ENCODE measurements at regions of chr17 and their contacts with region 1.

Region 1: DNA sequence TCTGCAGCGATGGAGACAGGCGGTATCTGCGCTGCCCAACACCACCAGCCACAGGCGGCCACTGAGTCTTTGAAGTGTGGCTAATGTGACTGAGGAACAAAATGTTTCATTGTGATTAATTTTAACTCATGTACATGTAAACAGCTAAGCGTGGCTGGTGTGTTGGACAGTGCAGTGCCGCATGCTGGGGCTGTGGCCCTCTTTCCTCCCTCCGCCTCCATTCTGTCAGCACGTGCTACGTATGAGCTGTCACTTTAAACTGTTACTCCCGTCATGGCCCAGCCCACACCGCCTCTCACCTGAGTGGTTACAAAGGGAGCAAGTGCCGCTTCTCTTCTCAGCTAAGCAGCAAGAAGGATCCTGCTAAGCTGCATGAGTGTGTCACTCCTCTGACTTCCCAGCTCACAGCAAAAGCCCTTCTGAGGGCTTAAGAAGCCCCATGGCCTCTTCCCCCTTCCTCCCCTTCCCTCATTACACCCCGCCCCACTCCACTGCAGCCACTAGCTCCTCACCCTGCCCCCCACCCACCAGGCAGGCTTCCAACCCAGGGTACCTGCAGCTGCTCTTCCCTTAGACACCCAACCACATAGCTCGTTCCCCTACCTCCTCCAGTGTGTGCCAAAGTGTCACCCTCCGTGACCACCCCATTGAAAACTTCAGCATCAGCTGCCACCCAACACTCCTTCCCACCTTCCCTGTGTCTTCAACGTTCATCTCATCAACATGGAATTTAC is 15.0 kb downstream of the HASPIN start:
- DNase-seq: peak; percentile 93
- ATAC-seq: peak; percentile 87
- H3K4me3 Mint-ChIP-seq: no peak overlapping the region
- H3K27ac Mint-ChIP-seq: peak overlapping the region; percentile 26
- H3K4me1 Mint-ChIP-seq: peaks cover 33% of the 10 kb centered on the region
- H3K27me3 Mint-ChIP-seq: no peaks in the 10 kb centered on the region
- CTCF ChIP-seq: no peak

Region 2: DNA sequence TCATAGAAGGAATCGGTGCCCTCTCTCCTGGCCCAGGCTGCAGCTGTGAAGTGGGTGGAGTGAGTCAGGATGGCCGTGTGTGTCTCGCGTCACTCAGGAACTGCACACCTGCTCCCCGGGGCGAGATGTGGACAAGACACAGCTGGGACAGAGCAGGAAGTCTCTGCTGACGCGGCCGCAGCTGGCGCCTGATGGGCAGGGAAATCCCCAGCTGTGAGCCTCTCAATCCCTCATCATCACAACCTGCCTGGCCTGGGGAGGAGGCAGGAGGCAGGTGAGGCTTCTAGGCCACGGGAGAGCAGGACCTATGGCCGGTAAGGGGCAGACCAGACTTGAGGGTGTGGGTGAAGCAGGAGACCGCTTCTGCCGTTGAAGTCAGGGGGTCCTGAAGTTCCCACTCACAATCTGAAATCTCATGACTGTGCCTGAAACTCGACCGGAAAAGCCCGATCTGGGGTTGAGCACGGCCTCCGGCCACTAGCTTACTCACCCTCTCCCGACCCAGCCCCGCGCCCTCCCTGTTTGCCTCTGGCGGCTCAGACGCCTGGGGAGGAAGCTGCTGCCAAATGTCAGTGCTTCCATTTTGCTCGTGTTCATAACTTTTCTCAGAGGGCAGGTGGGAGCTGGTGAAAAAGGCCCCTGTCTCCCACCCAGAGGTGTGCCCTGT is 180.0 kb before region 1 on chr17:
- CTCF ChIA-PET with region 1: no interaction called
- POLR2A ChIA-PET with region 1: no interaction called
- intact Hi-C with region 1: no loop called
- DNase-seq: peak; percentile 82
- ATAC-seq: peak; percentile 82
- H3K4me3 Mint-ChIP-seq: no peak overlapping the region
- H3K27ac Mint-ChIP-seq: peak overlapping the region; percentile 2
- H3K4me1 Mint-ChIP-seq: peaks cover 21% of the 10 kb centered on the region
- H3K27me3 Mint-ChIP-seq: peaks cover 9% of the 10 kb centered on the region
- CTCF ChIP-seq: no peak

Region 3: DNA sequence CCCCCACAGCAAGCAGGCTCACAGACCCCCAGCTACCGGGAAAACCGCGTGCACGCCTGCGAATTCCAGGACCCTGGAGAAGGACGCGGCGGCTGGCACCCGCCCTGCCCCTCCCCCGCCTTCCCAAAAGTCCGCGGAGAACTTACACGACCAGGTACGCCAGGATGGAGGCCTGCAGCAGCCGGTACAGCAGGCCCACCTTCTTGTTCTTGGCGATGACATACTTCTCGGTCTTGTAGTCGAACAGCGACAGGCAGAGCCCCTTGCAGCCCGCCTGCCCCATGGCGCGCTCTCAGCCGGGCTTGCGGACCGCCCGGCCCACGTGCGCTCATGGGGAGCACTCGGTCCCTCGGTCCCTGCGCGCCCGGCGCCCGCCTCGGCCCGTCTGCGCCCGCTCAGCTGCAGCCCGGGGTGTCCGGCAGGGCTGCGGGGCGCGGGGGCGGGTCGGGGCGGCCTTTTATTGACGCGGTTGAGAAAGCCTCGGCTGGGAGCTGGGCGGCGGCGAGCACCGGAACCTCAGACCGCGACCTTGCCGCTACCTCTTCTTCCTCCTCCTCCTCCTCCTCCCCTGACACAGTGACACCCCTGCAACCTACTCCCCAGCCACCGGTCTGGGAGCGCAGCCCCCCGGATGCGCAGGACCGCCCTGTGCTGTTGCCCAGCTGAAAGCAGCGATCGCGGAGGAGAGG is 42.9 kb before region 1 on chr17 and contains the start of gene P2RX5:
- CTCF ChIA-PET with region 1: interaction called, 22 read pairs
- POLR2A ChIA-PET with region 1: no interaction called
- intact Hi-C with region 1: no loop called
- DNase-seq: peak; percentile 60
- ATAC-seq: peak; percentile 60
- H3K4me3 Mint-ChIP-seq: peak within 1 kb of the TSS; percentile 87
- H3K27ac Mint-ChIP-seq: peak within 1 kb of the TSS; percentile 93
- H3K4me1 Mint-ChIP-seq: peaks cover 22% of the 10 kb centered on the region
- H3K27me3 Mint-ChIP-seq: no peaks in the 10 kb centered on the region
- CTCF ChIP-seq: no peak
- total RNA-seq, gene P2RX5: 35.7 to 39.5 TPM

Region 4: GRCh38 chr17:3723556-3724369 is 15.0 kb before region 1 on chr17 and contains the start of gene HASPIN:
- CTCF ChIA-PET with region 1: interaction called, 107 read pairs
- POLR2A ChIA-PET with region 1: interaction called, 7 read pairs
- intact Hi-C with region 1: no loop called
- DNase-seq: peak; percentile 93
- ATAC-seq: peak; percentile 91
- H3K4me3 Mint-ChIP-seq: peak within 1 kb of the TSS; percentile 81
- H3K27ac Mint-ChIP-seq: peak within 1 kb of the TSS; percentile 92
- H3K4me1 Mint-ChIP-seq: peaks cover 54% of the 10 kb centered on the region
- H3K27me3 Mint-ChIP-seq: no peaks in the 10 kb centered on the region
- CTCF ChIP-seq: peak; percentile 42
- total RNA-seq, gene HASPIN: 20.7 to 21.3 TPM

Region 5: GRCh38 chr17:3770466-3770865 is 31.7 kb after region 1 on chr17:
- CTCF ChIA-PET with region 1: interaction called, 22 read pairs
- POLR2A ChIA-PET with region 1: interaction called, 3 read pairs
- intact Hi-C with region 1: no loop called
- DNase-seq: peak; percentile 88
- ATAC-seq: peak; percentile 79
- H3K4me3 Mint-ChIP-seq: no peak overlapping the region
- H3K27ac Mint-ChIP-seq: peak overlapping the region; percentile 88
- H3K4me1 Mint-ChIP-seq: peaks cover 60% of the 10 kb centered on the region
- H3K27me3 Mint-ChIP-seq: peaks cover 9% of the 10 kb centered on the region
- CTCF ChIP-seq: no peak

Region 6: GRCh38 chr17:3812771-3813170 is 74.0 kb after region 1 on chr17:
- CTCF ChIA-PET with region 1: interaction called, 57 read pairs
- POLR2A ChIA-PET with region 1: interaction called, 3 read pairs
- intact Hi-C with region 1: loop called (anchors 5 kb)
- DNase-seq: no peak
- ATAC-seq: no peak
- H3K4me3 Mint-ChIP-seq: no peak overlapping the region
- H3K27ac Mint-ChIP-seq: no peak overlapping the region
- H3K4me1 Mint-ChIP-seq: peaks cover 9% of the 10 kb centered on the region
- H3K27me3 Mint-ChIP-seq: no peaks in the 10 kb centered on the region
- CTCF ChIP-seq: no peak

Region 7: GRCh38 chr17:3835410-3836229 is 96.9 kb after region 1 on chr17:
- CTCF ChIA-PET with region 1: interaction called, 367 read pairs
- POLR2A ChIA-PET with region 1: interaction called, 33 read pairs
- intact Hi-C with region 1: no loop called
- DNase-seq: no peak
- ATAC-seq: no peak
- H3K4me3 Mint-ChIP-seq: no peak overlapping the region
- H3K27ac Mint-ChIP-seq: no peak overlapping the region
- H3K4me1 Mint-ChIP-seq: peaks cover 18% of the 10 kb centered on the region
- H3K27me3 Mint-ChIP-seq: no peaks in the 10 kb centered on the region
- CTCF ChIP-seq: no peak

Region 8: DNA sequence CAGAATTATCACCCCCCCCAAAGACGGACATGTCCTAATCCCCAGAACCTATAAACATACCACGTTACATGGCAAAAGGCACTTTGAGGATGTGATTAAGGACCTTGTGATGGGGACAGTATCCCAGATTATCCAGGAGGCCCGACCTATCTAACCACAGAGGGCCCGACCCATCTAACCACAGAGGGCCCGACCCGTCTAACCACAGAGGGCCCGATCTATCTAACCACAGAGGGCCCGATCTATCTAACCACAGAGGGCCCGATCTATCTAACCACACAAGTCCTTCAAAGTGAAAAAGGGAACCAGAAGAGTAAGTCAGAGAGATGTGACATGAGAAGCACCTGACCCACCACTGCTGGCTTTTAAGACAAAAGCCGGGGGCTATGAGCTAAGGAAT is 468.2 kb after region 1 on chr17:
- CTCF ChIA-PET with region 1: no interaction called
- POLR2A ChIA-PET with region 1: no interaction called
- intact Hi-C with region 1: no loop called
- DNase-seq: no peak
- ATAC-seq: no peak
- H3K4me3 Mint-ChIP-seq: no peak overlapping the region
- H3K27ac Mint-ChIP-seq: peak overlapping the region; percentile 33
- H3K4me1 Mint-ChIP-seq: peaks cover 15% of the 10 kb centered on the region
- H3K27me3 Mint-ChIP-seq: no peaks in the 10 kb centered on the region
- CTCF ChIP-seq: no peak

Measured in activated CD8-positive, alpha-beta T cell treated with anti-CD3 and anti-CD28 coated beads for 36 hours (primary cell).